Heart left ventricle (tissue), 16 donors: ENCODE measurements at regions of chr19 and their contacts with region 1.

Region 1: GRCh38 chr19:35124098-35125060 is 8.8 kb downstream of the FXYD3 start:
- DNase-seq: peak; percentile 94 to 97 (median 97)
- ATAC-seq: peak; percentile 92 to 96 (median 94)
- H3K4me3 ChIP-seq: peak overlapping the region; percentile 4 to 68 (median 58)
- H3K27ac ChIP-seq: peak overlapping the region; percentile 67 to 94 (median 90)
- H3K4me1 ChIP-seq: peaks cover 0 to 38% (median 12%) of the 10 kb centered on the region in 12 donors
- H3K27me3 ChIP-seq: no peaks in the 10 kb centered on the region
- CTCF ChIP-seq: no peak
- POLR2A ChIP-seq: peak; percentile 35 to 95

Region 2: DNA sequence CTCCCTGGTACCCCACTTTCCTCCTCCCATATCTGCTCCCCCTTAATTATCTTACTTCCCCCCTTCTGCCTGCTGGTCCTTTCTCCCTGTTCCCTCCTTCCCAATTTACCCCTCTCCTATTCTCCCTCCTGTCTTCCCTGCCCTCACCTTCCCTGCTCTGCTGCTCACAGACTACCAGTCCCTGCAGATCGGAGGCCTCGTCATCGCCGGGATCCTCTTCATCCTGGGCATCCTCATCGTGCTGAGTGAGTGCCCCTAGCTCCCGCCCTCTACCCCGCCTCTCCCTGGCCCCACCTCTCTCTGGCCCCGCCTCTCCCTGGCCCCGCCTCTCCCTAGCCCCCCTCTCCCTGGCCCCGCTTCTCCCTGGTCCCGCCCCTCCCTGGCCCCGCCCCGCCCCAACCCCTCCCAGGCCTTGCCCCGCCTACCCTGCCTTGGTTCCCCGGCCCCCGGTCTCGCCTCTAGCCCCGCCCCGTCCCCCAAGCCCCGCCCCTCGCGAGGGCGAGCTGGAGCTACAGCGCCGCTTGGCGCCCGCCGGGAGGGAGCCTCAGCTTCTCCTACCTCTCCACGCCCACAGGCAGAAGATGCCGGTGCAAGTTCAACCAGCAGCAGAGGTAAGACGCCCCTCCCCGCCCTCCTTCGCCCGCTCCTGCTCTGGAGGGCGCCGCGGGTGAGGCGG is 16.7 kb after region 1 on chr19:
- intact Hi-C with region 1: loop called in 1 of 10 experiments (anchors 1 kb)
- DNase-seq: peak; percentile 90 to 97 (median 94)
- ATAC-seq: peak; percentile 61 to 78 (median 65)
- H3K4me3 ChIP-seq: peak overlapping the region in 11 of 12 donors; percentile 7 to 71 (median 58)
- H3K27ac ChIP-seq: peak overlapping the region in 11 of 12 donors; percentile 29 to 100 (median 96)
- H3K4me1 ChIP-seq: peaks cover 0 to 57% (median 39%) of the 10 kb centered on the region in 12 donors
- H3K27me3 ChIP-seq: peaks cover 0 to 23% (median 0%) of the 10 kb centered on the region in 9 donors
- CTCF ChIP-seq: peak in 10 of 12 donors; percentile 15 to 62 (median 36)
- POLR2A ChIP-seq: peak; percentile 59 to 81

Region 3: DNA sequence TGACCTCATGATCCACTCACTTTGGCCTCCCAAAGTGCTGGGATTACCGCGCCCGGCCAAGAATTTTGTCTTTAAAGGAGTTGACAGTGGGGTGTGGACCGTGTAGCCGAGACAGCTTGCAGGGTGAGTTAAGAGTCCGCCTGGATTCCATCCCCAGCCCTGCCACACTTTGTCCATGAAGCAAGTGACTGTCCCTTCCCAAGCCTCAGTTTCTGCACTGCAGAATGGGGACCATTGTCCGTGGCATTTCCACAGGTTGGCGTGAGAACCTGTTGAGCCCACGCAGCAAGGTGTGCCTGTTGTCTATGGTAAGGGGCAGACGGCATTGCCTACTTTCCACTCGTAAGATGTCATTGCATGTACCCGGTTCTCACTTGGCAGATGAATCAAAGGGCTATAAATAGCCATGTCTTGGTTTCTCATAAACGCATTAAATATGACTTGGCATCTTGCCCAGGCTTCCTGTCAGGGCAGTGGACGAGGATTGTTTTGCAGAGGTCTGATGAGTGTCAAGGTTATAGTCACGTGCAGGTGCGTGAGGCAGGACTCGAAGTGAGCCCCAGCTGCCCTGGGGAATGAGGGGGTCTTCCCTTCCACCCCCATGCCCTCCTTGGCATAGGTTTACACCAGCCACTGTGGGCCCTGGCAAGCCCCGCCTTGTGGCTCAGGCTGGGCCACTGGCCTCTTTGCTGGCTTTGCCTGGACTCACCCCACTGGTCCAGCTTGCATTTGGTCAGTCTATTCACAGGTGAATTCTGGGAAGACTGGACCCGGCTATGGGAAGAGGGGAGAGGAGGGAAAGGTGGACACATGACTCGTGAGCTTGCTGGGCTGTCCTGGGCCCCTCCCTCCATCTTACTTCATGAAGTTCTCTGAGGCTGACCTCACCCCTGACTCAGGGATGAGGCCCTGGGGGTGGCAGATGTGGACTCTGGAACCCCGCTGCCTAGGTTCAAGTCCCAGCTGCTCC is 89.6 kb after region 1 on chr19:
- intact Hi-C with region 1: no loop called
- DNase-seq: peak in 4 of 5 donors; percentile 70 to 89 (median 81)
- ATAC-seq: peak; percentile 81 to 87 (median 84)
- H3K4me3 ChIP-seq: peak overlapping the region in 1 of 12 donors; percentile 13
- H3K27ac ChIP-seq: peak overlapping the region; percentile 62 to 94 (median 72)
- H3K4me1 ChIP-seq: peaks cover 0 to 59% (median 25%) of the 10 kb centered on the region in 12 donors
- H3K27me3 ChIP-seq: no peaks in the 10 kb centered on the region
- CTCF ChIP-seq: no peak
- POLR2A ChIP-seq: no peak